CD8-positive, alpha-beta memory T cell (primary cell): ENCODE measurements at regions of chr10 and their contacts with region 1.

Region 1: GRCh38 chr10:95864906-95865813 is 42.6 kb upstream of the CC2D2B start:
- DNase-seq: peak in 3 of 5 donors; percentile 13 to 59 (median 29)
- H3K4me3 ChIP-seq: no peak overlapping the region
- H3K4me3 Mint-ChIP-seq: no peak overlapping the region
- H3K27ac ChIP-seq: no peak overlapping the region
- H3K27ac Mint-ChIP-seq: peak overlapping the region in 4 of 8 donors; percentile 56 to 83 (median 74)
- H3K4me1 ChIP-seq: no peaks in the 10 kb centered on the region
- H3K4me1 Mint-ChIP-seq: peaks cover 0 to 10% (median 4%) of the 10 kb centered on the region in 3 donors
- H3K27me3 ChIP-seq: no peaks in the 10 kb centered on the region
- H3K27me3 Mint-ChIP-seq: no peaks in the 10 kb centered on the region

Region 2: GRCh38 chr10:95792874-95793285 is 72.3 kb before region 1 on chr10:
- CTCF ChIA-PET with region 1: no interaction called
- POLR2A ChIA-PET with region 1: no interaction called
- DNase-seq: no peak
- H3K4me3 ChIP-seq: no peak overlapping the region
- H3K4me3 Mint-ChIP-seq: no peak overlapping the region
- H3K27ac ChIP-seq: no peak overlapping the region
- H3K27ac Mint-ChIP-seq: peak overlapping the region in 1 of 8 donors; percentile 61
- H3K4me1 ChIP-seq: no peaks in the 10 kb centered on the region
- H3K4me1 Mint-ChIP-seq: peaks cover 12 to 26% (median 17%) of the 10 kb centered on the region in 3 donors
- H3K27me3 ChIP-seq: no peaks in the 10 kb centered on the region
- H3K27me3 Mint-ChIP-seq: peaks cover 0 to 8% of the 10 kb centered on the region in 2 donors

Region 3: DNA sequence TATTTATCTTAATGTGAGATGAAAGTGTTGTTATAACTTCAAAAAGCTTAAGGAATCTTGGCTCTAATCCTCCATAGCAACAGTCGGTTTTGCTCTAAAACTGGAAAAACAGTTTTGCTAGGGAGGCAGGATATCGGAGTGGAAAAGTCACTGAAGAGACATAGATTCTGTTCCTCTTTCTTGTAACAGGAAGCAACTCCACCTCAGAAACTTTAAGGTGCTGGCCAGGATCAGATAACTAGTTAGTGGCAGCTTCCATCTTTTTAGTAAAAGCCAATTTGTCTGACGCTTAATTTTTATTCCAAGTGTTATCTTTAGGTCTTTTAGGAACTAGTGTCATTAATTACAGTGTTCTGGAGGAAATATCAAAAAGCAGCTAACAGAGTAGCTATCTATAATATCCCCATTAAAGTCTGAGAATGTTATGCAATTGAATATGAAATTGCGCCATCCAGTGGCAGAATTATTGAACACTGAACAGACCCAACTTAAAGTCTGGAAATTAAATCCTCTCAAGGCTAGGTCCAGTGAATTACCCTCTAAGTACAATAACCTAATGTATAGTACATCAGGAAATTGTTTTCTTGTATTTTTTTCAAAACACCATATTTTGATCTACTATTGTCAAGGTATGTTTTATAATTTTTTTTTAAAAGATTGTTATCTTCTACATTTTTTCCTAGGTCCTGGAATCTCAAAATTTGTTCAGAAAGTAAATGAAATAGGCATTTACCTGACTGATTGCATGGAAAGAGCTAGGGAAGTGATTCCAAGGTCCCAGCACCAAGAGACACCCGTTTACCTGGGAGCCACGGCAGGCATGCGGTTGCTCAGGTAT is 23.3 kb before region 1 on chr10:
- CTCF ChIA-PET with region 1: interaction called, 16 read pairs
- POLR2A ChIA-PET with region 1: no interaction called
- DNase-seq: peak in 4 of 5 donors; percentile 9 to 53 (median 36)
- H3K4me3 ChIP-seq: no peak overlapping the region
- H3K4me3 Mint-ChIP-seq: peak overlapping the region in 2 of 7 donors; percentile 8 to 22
- H3K27ac ChIP-seq: no peak overlapping the region
- H3K27ac Mint-ChIP-seq: peak overlapping the region in 7 of 8 donors; percentile 34 to 86 (median 67)
- H3K4me1 ChIP-seq: peaks cover 7% of the 10 kb centered on the region
- H3K4me1 Mint-ChIP-seq: peaks cover 14 to 16% (median 16%) of the 10 kb centered on the region in 3 donors
- H3K27me3 ChIP-seq: no peaks in the 10 kb centered on the region
- H3K27me3 Mint-ChIP-seq: peaks cover 2 to 10% of the 10 kb centered on the region in 2 donors